ENCODE measurements at regions of chr2 and their contacts with region 1.

Region 1: DNA sequence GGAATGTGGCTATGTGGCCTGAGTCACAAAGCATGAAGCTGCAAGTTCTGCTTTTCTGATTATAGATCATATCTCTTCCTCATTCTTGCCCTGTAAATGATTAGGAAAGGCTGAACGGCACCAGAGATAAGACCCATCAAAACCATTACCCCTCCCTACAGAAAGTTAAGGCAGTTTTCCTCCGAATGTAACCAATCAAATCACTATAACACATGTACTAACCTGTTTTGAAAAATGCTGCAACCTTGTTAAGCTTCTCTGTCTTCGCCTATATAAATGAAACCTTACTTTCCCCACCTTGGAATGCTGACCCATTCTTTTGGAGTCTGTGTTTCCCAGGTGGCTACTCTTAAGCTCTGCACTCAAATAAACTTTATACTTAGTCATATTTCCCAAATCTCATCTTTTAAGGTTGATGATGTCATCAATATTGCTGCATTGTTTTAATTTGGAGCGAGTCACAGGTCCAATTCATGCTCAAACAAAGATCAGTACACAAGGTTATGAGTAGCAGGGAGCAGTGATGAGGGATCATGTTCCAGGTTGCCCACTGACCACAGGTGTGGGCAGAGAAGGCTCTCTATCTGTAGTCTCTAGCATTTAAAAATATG is 662.3 kb downstream of the IRS1 start:
- DNase-seq: peak; percentile 30
- H3K4me3 Mint-ChIP-seq: peak overlapping the region; percentile 45
- H3K27ac Mint-ChIP-seq: peak overlapping the region; percentile 17
- H3K4me1 Mint-ChIP-seq: peaks cover 32% of the 10 kb centered on the region
- H3K27me3 Mint-ChIP-seq: no peaks in the 10 kb centered on the region
- CTCF ChIP-seq: no peak

Region 2: GRCh38 chr2:225771691-225772090 is 365.6 kb before region 1 on chr2:
- CTCF ChIA-PET with region 1: no interaction called
- intact Hi-C with region 1: no loop called
- DNase-seq: no peak
- H3K4me3 Mint-ChIP-seq: no peak overlapping the region
- H3K27ac Mint-ChIP-seq: no peak overlapping the region
- H3K4me1 Mint-ChIP-seq: no peaks in the 10 kb centered on the region
- H3K27me3 Mint-ChIP-seq: no peaks in the 10 kb centered on the region
- CTCF ChIP-seq: no peak

Region 3: DNA sequence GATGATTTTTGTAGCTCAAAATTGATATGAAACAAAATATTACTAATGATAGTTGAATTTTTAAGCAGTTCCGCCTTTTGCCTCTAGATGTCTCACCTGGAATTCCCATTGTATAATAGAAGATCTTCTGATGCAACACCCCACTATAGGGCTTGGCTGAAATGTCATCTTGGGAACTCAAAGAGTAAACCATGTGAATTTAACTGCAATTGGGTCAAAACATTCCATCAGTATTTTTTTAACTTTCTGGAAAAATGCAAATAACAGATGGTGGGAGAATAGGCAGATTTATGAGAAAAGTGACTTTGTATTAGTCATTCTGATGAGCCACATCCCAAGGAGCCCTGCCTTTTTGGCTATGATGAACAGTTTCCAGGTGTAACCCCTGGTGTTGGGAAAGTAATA is 247.9 kb before region 1 on chr2:
- CTCF ChIA-PET with region 1: no interaction called
- intact Hi-C with region 1: loop called (anchors 5 kb)
- DNase-seq: peak; percentile 33
- H3K4me3 Mint-ChIP-seq: no peak overlapping the region
- H3K27ac Mint-ChIP-seq: no peak overlapping the region
- H3K4me1 Mint-ChIP-seq: peaks cover 5% of the 10 kb centered on the region
- H3K27me3 Mint-ChIP-seq: no peaks in the 10 kb centered on the region
- CTCF ChIP-seq: peak; percentile 78

Region 4: GRCh38 chr2:225920621-225921220 is 216.6 kb before region 1 on chr2:
- CTCF ChIA-PET with region 1: no interaction called
- intact Hi-C with region 1: loop called (anchors 5 kb)
- DNase-seq: no peak
- H3K4me3 Mint-ChIP-seq: peak overlapping the region; percentile 52
- H3K27ac Mint-ChIP-seq: peak overlapping the region; percentile 81
- H3K4me1 Mint-ChIP-seq: peaks cover 15% of the 10 kb centered on the region
- H3K27me3 Mint-ChIP-seq: no peaks in the 10 kb centered on the region
- CTCF ChIP-seq: no peak

Region 5: GRCh38 chr2:226185616-226186211 is 48.4 kb after region 1 on chr2:
- CTCF ChIA-PET with region 1: no interaction called
- intact Hi-C with region 1: no loop called
- DNase-seq: peak; percentile 37
- H3K4me3 Mint-ChIP-seq: no peak overlapping the region
- H3K27ac Mint-ChIP-seq: peak overlapping the region; percentile 94
- H3K4me1 Mint-ChIP-seq: peaks cover 27% of the 10 kb centered on the region
- H3K27me3 Mint-ChIP-seq: no peaks in the 10 kb centered on the region
- CTCF ChIP-seq: no peak

Region 6: GRCh38 chr2:226247289-226248275 is 110.3 kb after region 1 on chr2:
- CTCF ChIA-PET with region 1: no interaction called
- intact Hi-C with region 1: loop called (anchors 5 kb)
- DNase-seq: no peak
- H3K4me3 Mint-ChIP-seq: no peak overlapping the region
- H3K27ac Mint-ChIP-seq: peak overlapping the region; percentile 77
- H3K4me1 Mint-ChIP-seq: peaks cover 15% of the 10 kb centered on the region
- H3K27me3 Mint-ChIP-seq: no peaks in the 10 kb centered on the region
- CTCF ChIP-seq: no peak

Region 7: GRCh38 chr2:226411727-226412360 is 274.5 kb after region 1 on chr2:
- CTCF ChIA-PET with region 1: no interaction called
- intact Hi-C with region 1: loop called (anchors 1 kb)
- DNase-seq: peak; percentile 73
- H3K4me3 Mint-ChIP-seq: peak overlapping the region; percentile 17
- H3K27ac Mint-ChIP-seq: peak overlapping the region; percentile 95
- H3K4me1 Mint-ChIP-seq: peaks cover 37% of the 10 kb centered on the region
- H3K27me3 Mint-ChIP-seq: no peaks in the 10 kb centered on the region
- CTCF ChIP-seq: no peak